Testis (tissue), 5 donors: ENCODE measurements at regions of chr12 and their contacts with region 1.

Region 1: DNA sequence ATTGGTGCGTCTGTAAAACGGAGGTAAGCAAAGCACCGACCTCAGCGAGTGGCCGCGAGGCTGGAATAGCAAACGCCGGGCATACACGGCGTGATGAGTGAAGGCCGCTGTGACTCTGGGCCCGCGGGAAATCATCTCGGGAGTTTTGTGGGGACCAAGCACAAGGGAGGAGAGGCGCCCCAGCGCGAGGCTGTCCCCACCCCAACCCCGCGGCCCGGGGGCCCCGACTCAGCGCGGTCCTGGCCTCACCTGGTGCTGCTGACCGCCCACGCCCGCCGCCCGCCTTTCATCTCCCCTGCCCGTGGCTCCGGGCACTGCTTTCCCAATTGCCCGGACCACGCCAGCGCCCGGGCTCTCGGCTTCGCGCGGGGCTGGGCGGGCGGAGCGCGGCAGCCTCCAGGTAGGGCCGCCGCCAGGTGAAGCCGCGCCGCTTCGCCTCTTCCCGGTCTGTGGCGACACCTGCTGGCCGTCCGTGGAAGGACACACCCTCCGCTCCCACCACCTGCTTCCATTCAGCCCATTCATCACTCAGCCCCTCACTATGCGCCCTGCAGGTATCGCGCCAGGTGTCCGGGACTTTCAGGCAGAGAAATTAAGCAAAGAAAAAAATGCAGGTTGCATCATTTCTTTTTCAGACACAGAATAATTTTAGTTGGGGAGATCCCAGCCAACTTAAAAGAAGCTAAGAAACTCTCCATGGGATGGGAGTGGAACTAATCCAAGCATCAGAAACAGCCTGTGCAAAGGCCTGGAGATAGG is 360.4 kb downstream of the MED13L start:
- DNase-seq: peak; percentile 77
- H3K4me3 ChIP-seq: peak overlapping the region; percentile 24 to 34
- H3K27ac ChIP-seq: no peak overlapping the region
- H3K4me1 ChIP-seq: no peaks in the 10 kb centered on the region
- H3K27me3 ChIP-seq: no peaks in the 10 kb centered on the region
- CTCF ChIP-seq: peak; percentile 85 to 95 (median 95)
- POLR2A ChIP-seq: no peak

Region 2: DNA sequence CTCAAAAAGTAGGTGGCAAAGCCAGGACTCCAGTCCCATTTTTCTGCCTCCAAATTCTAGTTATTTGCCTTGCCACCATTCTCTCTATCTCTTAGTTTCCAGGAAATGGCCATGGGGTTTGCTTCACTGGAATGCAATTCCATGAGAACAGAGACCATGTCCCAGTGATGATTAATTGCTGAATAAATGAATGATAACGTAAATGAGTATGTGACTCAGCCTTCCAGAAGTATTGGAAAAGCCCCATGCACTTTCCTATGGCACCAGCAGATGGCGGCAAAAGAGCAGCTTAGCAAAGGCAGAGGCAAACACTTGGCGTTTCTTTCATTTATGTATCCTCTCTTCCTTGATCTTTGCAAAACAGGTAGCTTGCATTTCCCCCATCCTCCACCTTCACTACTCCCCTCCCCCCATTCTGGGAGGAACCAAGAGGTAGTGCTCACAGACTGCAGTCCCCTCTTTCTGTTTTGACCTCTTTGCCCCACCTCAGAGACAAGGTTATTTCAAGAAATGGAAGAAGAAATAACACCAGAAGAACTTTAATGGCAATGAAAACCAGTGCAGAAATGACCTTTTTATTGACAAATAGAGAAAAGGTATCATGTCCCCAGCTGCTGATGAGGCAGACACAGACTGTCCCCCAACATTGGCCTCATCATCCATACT is 1254.4 kb before region 1 on chr12:
- intact Hi-C with region 1: loop called (anchors 10 kb)
- DNase-seq: peak; percentile 90
- H3K4me3 ChIP-seq: no peak overlapping the region
- H3K27ac ChIP-seq: no peak overlapping the region
- H3K4me1 ChIP-seq: peaks cover 12% of the 10 kb centered on the region
- H3K27me3 ChIP-seq: no peaks in the 10 kb centered on the region
- CTCF ChIP-seq: peak; percentile 84 to 96 (median 95)
- POLR2A ChIP-seq: no peak

Region 3: GRCh38 chr12:115835445-115835844 is 81.6 kb before region 1 on chr12:
- intact Hi-C with region 1: no loop called
- DNase-seq: no peak
- H3K4me3 ChIP-seq: no peak overlapping the region
- H3K27ac ChIP-seq: no peak overlapping the region
- H3K4me1 ChIP-seq: no peaks in the 10 kb centered on the region
- H3K27me3 ChIP-seq: no peaks in the 10 kb centered on the region
- CTCF ChIP-seq: no peak
- POLR2A ChIP-seq: no peak